ENCODE measurements at regions of chr14 and their contacts with region 1.

Region 1: DNA sequence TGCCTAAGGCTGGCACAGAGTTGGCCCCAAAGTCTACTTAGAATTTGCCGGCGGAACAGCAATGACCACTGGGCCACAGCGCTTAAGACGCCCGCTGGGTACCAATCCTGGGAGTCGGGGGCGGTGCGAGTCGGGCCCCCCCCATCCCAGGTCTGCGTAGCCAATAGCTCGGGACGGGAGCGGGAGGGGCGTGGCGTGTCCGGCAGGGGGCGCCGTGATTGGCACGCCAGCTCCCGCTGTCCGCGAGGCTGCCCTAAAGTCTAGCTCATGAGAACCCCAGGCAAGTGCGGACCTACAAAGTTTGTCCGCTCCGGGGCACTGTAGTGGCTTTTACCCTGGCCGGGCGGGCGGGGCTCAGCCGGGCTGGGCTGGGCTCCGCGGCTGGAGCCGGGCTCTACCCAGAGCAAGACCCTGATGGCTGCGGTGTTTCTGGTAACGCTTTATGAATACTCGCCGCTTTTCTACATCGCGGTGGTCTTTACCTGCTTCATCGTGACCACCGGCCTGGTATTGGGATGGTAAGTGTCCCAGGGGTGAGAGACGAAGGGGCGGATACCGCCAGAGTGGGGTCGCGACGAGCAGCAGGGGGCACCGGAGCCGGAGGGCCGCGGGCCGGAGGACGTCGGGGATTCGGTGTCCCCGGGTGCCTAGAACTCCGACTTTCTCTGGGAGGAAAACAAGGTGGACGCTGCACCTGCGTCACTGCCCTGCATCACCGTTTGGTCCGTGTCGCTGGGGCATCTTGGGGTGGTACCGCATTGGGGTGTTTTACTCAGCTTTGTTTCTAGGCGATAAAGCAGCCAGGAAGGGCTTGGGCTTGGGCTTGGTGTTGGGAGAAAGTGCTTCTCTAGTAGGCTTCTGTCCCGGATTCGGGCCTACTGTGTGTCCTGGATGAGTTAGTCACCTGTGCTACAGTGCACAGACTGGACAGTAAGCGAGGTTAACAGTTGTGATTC is at the start of gene CGRRF1:
- DNase-seq: peak; percentile 98
- ATAC-seq: peak; percentile 99
- H3K4me3 Mint-ChIP-seq: peak within 1 kb of the TSS; percentile 98
- H3K27ac Mint-ChIP-seq: peak within 1 kb of the TSS; percentile 94
- H3K4me1 Mint-ChIP-seq: peaks cover 13% of the 10 kb centered on the region
- H3K27me3 Mint-ChIP-seq: peaks cover 6% of the 10 kb centered on the region
- CTCF ChIP-seq: peak; percentile 77
- total RNA-seq, gene CGRRF1: 13.0 to 17.5 TPM (median 15.1 TPM) in 3 replicates

Region 2: GRCh38 chr14:53368711-53369191 is 1141.1 kb before region 1 on chr14:
- CTCF ChIA-PET with region 1: no interaction called
- POLR2A ChIA-PET with region 1: no interaction called
- DNase-seq: no peak
- ATAC-seq: no peak
- H3K4me3 Mint-ChIP-seq: no peak overlapping the region
- H3K27ac Mint-ChIP-seq: no peak overlapping the region
- H3K4me1 Mint-ChIP-seq: peaks cover 30% of the 10 kb centered on the region
- H3K27me3 Mint-ChIP-seq: peaks cover 3% of the 10 kb centered on the region; the same call in 1 of the 2 replicates
- CTCF ChIP-seq: no peak

Region 3: GRCh38 chr14:54488646-54489317 is 21.0 kb before region 1 on chr14 and contains the start of gene GMFB:
- CTCF ChIA-PET with region 1: interaction called, 18 read pairs
- POLR2A ChIA-PET with region 1: interaction called, 7 read pairs
- DNase-seq: peak; percentile 87
- ATAC-seq: peak; percentile 84
- H3K4me3 Mint-ChIP-seq: peak within 1 kb of the TSS; percentile 92
- H3K27ac Mint-ChIP-seq: peak within 1 kb of the TSS; percentile 95
- H3K4me1 Mint-ChIP-seq: peaks cover 49% of the 10 kb centered on the region
- H3K27me3 Mint-ChIP-seq: no peaks in the 10 kb centered on the region
- CTCF ChIP-seq: no peak
- total RNA-seq, gene GMFB: 56.4 to 63.7 TPM (median 58.0 TPM) in 3 replicates

Region 4: GRCh38 chr14:54606178-54606577 is 96.4 kb after region 1 on chr14:
- CTCF ChIA-PET with region 1: no interaction called
- POLR2A ChIA-PET with region 1: no interaction called
- DNase-seq: peak; percentile 28
- ATAC-seq: peak; percentile 93
- H3K4me3 Mint-ChIP-seq: no peak overlapping the region
- H3K27ac Mint-ChIP-seq: no peak overlapping the region
- H3K4me1 Mint-ChIP-seq: peaks cover 4% of the 10 kb centered on the region; the same call in 1 of the 2 replicates
- H3K27me3 Mint-ChIP-seq: no peaks in the 10 kb centered on the region
- CTCF ChIP-seq: no peak

Measured in WTC11 (cell line).